ENCODE measurements at regions of chr10 and their contacts with region 1.

Region 1: GRCh38 chr10:78047314-78047891 is 13.7 kb downstream of the RPS24 start:
- DNase-seq: peak; percentile 86
- ATAC-seq: peak; percentile 82

Region 2: GRCh38 chr10:78657163-78657861 is 609.9 kb after region 1 on chr10:
- intact Hi-C with region 1: loop called (anchors 5 kb)
- DNase-seq: peak; percentile 78
- ATAC-seq: peak; percentile 85